Heart right ventricle (tissue), 16 donors: ENCODE measurements at regions of chr7 and their contacts with region 1.

Region 1: DNA sequence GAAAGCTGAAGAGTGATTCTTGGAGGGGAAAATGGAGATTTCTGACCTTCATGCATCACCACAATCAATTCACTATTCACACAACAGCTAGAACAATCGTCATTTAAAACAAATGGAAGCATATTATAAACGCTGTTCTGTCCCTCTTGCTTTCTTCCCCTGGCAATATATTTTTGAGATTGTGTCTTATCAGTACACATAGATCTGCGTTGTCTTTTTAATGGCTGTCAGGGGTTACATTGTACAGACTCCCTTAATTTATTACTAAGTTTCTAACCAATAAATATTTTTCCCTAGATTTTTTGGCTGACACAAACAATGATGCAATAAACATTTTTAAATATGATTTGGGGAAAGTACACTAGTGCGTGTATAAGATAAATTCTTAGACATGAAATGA is 1115.7 kb upstream of the C7orf33 start:
- DNase-seq: no peak
- ATAC-seq: no peak
- H3K4me3 ChIP-seq: no peak overlapping the region
- H3K27ac ChIP-seq: no peak overlapping the region
- H3K4me1 ChIP-seq: no peaks in the 10 kb centered on the region
- H3K27me3 ChIP-seq: no peaks in the 10 kb centered on the region
- CTCF ChIP-seq: no peak

Region 2: GRCh38 chr7:147432079-147432478 is 42.8 kb before region 1 on chr7:
- intact Hi-C with region 1: loop called in 1 of 10 experiments (anchors 5 kb)
- DNase-seq: no peak
- ATAC-seq: no peak
- H3K4me3 ChIP-seq: no peak overlapping the region
- H3K27ac ChIP-seq: no peak overlapping the region
- H3K4me1 ChIP-seq: no peaks in the 10 kb centered on the region
- H3K27me3 ChIP-seq: no peaks in the 10 kb centered on the region
- CTCF ChIP-seq: no peak

Region 3: GRCh38 chr7:147639037-147639436 is 164.2 kb after region 1 on chr7:
- intact Hi-C with region 1: no loop called
- DNase-seq: no peak
- ATAC-seq: no peak
- H3K4me3 ChIP-seq: no peak overlapping the region
- H3K27ac ChIP-seq: no peak overlapping the region
- H3K4me1 ChIP-seq: no peaks in the 10 kb centered on the region
- H3K27me3 ChIP-seq: no peaks in the 10 kb centered on the region
- CTCF ChIP-seq: no peak

Region 4: DNA sequence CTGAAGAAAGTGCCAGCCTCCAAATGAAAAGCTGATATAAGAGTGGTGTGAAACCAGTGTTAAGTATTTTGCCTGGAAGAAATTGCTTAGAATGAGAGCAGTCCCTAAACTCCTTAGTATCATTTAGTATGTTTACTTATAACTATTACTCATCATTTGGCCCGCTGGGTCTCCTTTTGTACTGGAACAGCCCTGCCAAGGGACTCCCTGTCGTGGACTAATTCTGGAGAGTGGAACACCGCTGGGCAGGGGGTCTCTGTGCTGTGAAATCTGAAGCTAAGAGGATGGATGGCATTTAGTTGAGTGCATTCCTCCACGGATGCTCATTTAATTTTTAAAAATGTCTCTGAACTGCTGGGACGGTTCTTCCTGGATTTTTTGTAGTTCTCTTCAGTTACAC is 225.8 kb after region 1 on chr7:
- intact Hi-C with region 1: no loop called
- DNase-seq: no peak
- ATAC-seq: no peak
- H3K4me3 ChIP-seq: no peak overlapping the region
- H3K27ac ChIP-seq: no peak overlapping the region
- H3K4me1 ChIP-seq: no peaks in the 10 kb centered on the region
- H3K27me3 ChIP-seq: no peaks in the 10 kb centered on the region
- CTCF ChIP-seq: no peak